Activated CD4-positive, alpha-beta T cell treated with anti-CD3 and anti-CD28 coated beads for 36 hours (primary cell): ENCODE measurements at regions of chrX and their contacts with region 1.

Region 1: DNA sequence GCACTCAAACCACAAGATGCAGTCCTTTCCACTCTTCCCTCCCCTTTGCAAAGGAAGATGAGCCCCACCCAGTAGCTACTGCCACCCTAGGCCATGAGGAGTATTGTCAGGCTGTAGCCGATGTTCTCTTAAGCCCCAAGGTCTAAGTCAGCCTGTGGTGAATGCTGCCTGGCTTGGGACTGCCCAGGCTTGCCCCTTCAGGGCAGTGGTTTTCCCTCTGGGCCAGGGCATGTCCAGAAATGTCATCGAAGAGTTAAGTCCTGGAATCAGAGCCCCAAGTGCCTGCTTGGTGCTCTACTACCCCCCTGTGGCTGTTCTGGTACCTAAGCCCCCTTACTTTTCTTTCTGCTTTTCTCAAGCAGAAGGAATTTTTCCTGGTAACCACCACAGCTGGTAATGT is 11.8 kb upstream of the PGK1 start:
- DNase-seq: peak; percentile 29
- ATAC-seq: peak; percentile 81
- H3K4me3 Mint-ChIP-seq: no peak overlapping the region
- H3K27ac Mint-ChIP-seq: no peak overlapping the region
- H3K4me1 Mint-ChIP-seq: peaks cover 3% of the 10 kb centered on the region
- H3K27me3 Mint-ChIP-seq: no peaks in the 10 kb centered on the region

Region 2: GRCh38 chrX:77572322-77572721 is 520.0 kb before region 1 on chrX:
- CTCF ChIA-PET with region 1: no interaction called
- POLR2A ChIA-PET with region 1: no interaction called
- intact Hi-C with region 1: no loop called
- DNase-seq: no peak
- ATAC-seq: no peak
- H3K4me3 Mint-ChIP-seq: no peak overlapping the region
- H3K27ac Mint-ChIP-seq: no peak overlapping the region
- H3K4me1 Mint-ChIP-seq: no peaks in the 10 kb centered on the region
- H3K27me3 Mint-ChIP-seq: no peaks in the 10 kb centered on the region

Region 3: GRCh38 chrX:78035061-78035460 is 57.2 kb before region 1 on chrX:
- CTCF ChIA-PET with region 1: no interaction called
- POLR2A ChIA-PET with region 1: no interaction called
- intact Hi-C with region 1: loop called in 1 of 2 experiments (anchors 5 kb)
- DNase-seq: no peak
- ATAC-seq: no peak
- H3K4me3 Mint-ChIP-seq: no peak overlapping the region
- H3K27ac Mint-ChIP-seq: no peak overlapping the region
- H3K4me1 Mint-ChIP-seq: peaks cover 2% of the 10 kb centered on the region
- H3K27me3 Mint-ChIP-seq: no peaks in the 10 kb centered on the region